Activated CD4-positive, alpha-beta memory T cell treated with anti-CD3 and anti-CD28 coated beads, Interleukin-2, amount 10 ng/mL, durations not matched to agents 7 days and 5 days (primary cell): ENCODE measurements at regions of chrX and their contacts with region 1.

Region 1: DNA sequence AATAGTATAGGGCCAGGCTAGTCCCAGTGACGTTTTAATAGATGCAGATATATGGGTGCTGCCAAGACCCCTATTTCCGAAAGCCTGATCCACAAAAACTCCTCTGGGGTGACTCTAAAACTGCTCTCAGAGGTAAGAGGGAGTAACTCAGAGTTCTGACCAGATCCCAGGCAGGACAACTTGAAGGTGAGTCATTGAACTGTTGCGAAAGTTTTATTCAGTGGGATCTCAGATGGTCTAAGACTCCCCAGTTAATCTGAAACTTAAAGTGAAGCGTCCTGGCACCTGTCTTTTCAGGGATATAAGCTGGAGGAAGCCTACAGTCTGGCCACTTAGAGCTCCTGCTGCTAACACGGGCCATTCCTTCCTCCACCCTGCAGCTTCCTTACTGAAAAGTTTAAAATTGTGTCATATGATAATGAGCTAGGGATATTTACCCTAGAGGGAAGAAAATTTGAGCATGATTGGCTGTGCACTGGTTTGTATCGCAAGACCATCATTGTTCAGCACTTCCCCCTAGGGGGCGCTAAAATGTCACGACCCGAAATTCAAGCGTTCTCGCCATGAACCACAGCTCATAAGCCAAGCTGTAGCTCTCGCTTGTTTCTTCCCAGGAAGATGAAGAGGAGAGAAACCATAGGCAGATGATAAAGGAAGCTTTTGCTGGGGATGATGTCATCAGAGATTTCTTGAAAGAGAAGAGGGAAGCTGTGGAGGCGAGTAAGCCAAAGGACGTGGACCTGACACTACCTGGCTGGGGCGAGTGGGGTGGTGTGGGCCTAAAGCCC is 19.5 kb downstream of the UTP14A start:
- DNase-seq: peak; percentile 72
- H3K4me3 Mint-ChIP-seq: no peak overlapping the region
- H3K27ac Mint-ChIP-seq: no peak overlapping the region
- H3K4me1 Mint-ChIP-seq: peaks cover 4% of the 10 kb centered on the region
- H3K27me3 Mint-ChIP-seq: no peaks in the 10 kb centered on the region

Region 2: DNA sequence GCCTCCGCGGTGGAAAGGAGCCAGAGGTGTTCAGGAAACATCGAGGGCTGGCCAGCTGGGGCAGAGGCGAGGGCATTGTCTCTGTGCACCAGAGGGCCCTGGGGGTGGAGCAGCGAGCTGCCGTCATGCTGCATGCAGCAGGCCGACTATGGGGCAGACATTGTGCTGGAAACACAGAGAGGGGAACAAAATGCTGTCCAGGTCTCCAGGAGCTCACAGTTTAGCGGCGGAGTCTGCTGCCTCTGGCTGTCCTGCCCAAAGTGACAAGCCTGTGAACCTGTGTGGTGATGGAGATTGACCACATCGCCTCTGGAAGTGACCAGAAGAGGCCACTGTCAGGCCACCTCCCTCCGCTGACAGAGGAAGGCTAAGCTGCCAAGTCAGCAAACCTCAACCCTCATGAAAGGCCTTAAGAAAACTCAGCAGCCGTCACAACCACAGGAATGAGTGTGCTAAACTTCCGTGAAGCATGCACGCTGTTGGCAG is 165.9 kb before region 1 on chrX:
- CTCF ChIA-PET with region 1: no interaction called
- POLR2A ChIA-PET with region 1: no interaction called
- DNase-seq: peak; percentile 75
- H3K4me3 Mint-ChIP-seq: peak overlapping the region; percentile 16
- H3K27ac Mint-ChIP-seq: peak overlapping the region; percentile 94
- H3K4me1 Mint-ChIP-seq: peaks cover 68% of the 10 kb centered on the region
- H3K27me3 Mint-ChIP-seq: no peaks in the 10 kb centered on the region

Region 3: GRCh38 chrX:129905787-129906580 is 19.5 kb before region 1 on chrX and contains the start of gene UTP14A:
- CTCF ChIA-PET with region 1: interaction called, 13 read pairs
- POLR2A ChIA-PET with region 1: interaction called, 7 read pairs
- DNase-seq: peak; percentile 89
- H3K4me3 Mint-ChIP-seq: peak within 1 kb of the TSS; percentile 93
- H3K27ac Mint-ChIP-seq: peak within 1 kb of the TSS; percentile 86
- H3K4me1 Mint-ChIP-seq: peaks cover 22% of the 10 kb centered on the region
- H3K27me3 Mint-ChIP-seq: no peaks in the 10 kb centered on the region
- total RNA-seq, gene UTP14A: 15.3 to 18.4 TPM

Region 4: GRCh38 chrX:130024127-130024526 is 98.6 kb after region 1 on chrX:
- CTCF ChIA-PET with region 1: interaction called, 91 read pairs
- POLR2A ChIA-PET with region 1: interaction called, 4 read pairs
- DNase-seq: peak; percentile 88
- H3K4me3 Mint-ChIP-seq: peak overlapping the region; percentile 57
- H3K27ac Mint-ChIP-seq: peak overlapping the region; percentile 73
- H3K4me1 Mint-ChIP-seq: peaks cover 14% of the 10 kb centered on the region
- H3K27me3 Mint-ChIP-seq: no peaks in the 10 kb centered on the region

Region 5: DNA sequence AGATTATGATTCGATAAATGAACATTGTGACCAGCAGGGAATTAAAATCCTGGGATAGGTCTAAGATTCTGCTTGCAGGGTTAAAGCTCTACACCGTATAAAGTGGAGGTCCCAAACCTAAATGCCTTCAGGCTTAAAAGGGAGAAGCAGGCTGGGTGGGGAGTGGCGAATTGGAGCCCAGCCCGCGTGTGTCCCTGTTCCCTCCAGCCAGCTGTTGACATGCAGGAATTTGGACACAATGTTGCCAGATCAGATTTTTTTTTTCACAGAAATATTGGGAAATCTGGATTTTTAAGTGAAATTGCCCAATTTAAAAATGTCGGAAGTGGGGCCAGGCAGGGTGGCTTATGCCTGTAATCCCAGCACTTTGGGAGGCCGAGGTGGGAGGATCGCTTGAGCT is 124.3 kb after region 1 on chrX:
- CTCF ChIA-PET with region 1: no interaction called
- POLR2A ChIA-PET with region 1: no interaction called
- DNase-seq: no peak
- H3K4me3 Mint-ChIP-seq: no peak overlapping the region
- H3K27ac Mint-ChIP-seq: no peak overlapping the region
- H3K4me1 Mint-ChIP-seq: no peaks in the 10 kb centered on the region
- H3K27me3 Mint-ChIP-seq: no peaks in the 10 kb centered on the region